ENCODE measurements at regions of chr2 and their contacts with region 1.

Region 1: DNA sequence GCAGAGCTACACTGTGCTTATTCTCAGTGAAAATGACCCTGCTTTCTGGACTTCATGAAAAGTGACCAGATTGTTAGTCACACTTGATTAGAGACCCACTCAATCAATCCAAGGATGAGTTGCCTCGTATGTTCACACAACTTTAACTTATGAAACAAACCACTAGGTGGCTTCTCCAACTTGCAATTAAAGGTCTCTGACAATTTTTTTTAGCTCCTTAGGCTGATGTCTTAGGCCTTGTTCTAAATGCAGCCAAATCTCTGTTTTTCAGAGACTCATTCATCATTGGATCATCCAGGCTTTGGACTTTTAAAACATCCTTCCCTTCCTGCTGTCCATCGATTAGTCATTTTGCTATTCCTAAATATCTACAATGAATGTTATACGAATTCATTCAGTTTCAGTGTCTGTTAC is 63.4 kb downstream of the MREG start:
- DNase-seq: peak; percentile 38
- ATAC-seq: no peak
- H3K4me3 ChIP-seq: no peak overlapping the region
- H3K4me3 Mint-ChIP-seq: no peak overlapping the region
- H3K27ac ChIP-seq: no peak overlapping the region
- H3K27ac Mint-ChIP-seq: no peak overlapping the region
- H3K4me1 ChIP-seq: no peaks in the 10 kb centered on the region
- H3K4me1 Mint-ChIP-seq: no peaks in the 10 kb centered on the region
- H3K27me3 ChIP-seq: no peaks in the 10 kb centered on the region
- H3K27me3 Mint-ChIP-seq: no peaks in the 10 kb centered on the region
- CTCF ChIP-seq: peak; percentile 57

Region 2: DNA sequence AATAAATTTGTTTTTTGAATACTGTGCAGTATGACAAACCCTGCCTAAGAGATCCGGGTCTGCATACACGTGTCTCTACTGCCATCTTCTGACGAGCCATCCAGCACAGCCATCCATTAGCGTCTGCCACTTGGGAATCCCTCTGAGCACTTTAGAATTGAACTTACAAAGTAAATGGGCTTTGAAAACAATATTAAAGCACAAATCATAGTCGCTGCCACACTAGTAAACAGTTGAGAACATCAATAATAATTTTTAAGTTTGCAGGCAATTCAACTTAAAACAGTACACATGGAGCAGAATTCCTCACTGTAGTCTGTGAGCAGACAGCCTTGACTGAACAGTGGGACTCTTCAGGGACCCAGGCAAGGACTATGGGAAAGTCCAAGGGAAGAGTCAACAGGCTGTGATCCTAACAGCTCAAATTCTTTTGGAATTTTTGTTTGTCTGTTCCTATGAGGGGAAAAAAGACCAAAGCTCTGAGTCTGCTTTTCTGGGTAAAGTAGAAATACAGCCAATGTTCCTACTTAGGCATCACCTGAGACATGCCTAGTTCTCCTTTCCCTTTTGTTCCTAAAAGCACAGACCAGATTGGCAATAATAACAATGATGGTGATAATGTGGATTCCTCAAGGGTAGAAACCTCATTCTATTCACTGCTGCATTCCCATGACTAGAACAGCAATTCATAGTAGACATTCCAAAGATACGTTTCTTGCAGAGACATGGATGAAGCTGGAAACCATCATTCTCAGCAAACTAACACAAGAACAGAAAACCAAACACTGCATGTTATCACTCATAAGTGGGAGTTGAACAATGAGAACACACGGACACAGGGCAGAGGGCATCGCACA is 29.5 kb before region 1 on chr2:
- CTCF ChIA-PET with region 1: no interaction called
- POLR2A ChIA-PET with region 1: no interaction called
- intact Hi-C with region 1: no loop called
- DNase-seq: peak; percentile 70
- ATAC-seq: peak; percentile 56
- H3K4me3 ChIP-seq: no peak overlapping the region
- H3K4me3 Mint-ChIP-seq: no peak overlapping the region
- H3K27ac ChIP-seq: no peak overlapping the region
- H3K27ac Mint-ChIP-seq: no peak overlapping the region
- H3K4me1 ChIP-seq: no peaks in the 10 kb centered on the region
- H3K4me1 Mint-ChIP-seq: no peaks in the 10 kb centered on the region
- H3K27me3 ChIP-seq: no peaks in the 10 kb centered on the region
- H3K27me3 Mint-ChIP-seq: peaks cover 23% of the 10 kb centered on the region
- CTCF ChIP-seq: peak; percentile 88

Region 3: GRCh38 chr2:216023055-216023648 is 73.2 kb after region 1 on chr2:
- CTCF ChIA-PET with region 1: interaction called, 53 read pairs
- POLR2A ChIA-PET with region 1: no interaction called
- intact Hi-C with region 1: loop called (anchors 1 kb)
- DNase-seq: peak; percentile 56
- ATAC-seq: peak; percentile 64
- H3K4me3 ChIP-seq: no peak overlapping the region
- H3K4me3 Mint-ChIP-seq: no peak overlapping the region
- H3K27ac ChIP-seq: no peak overlapping the region
- H3K27ac Mint-ChIP-seq: no peak overlapping the region
- H3K4me1 ChIP-seq: no peaks in the 10 kb centered on the region
- H3K4me1 Mint-ChIP-seq: no peaks in the 10 kb centered on the region
- H3K27me3 ChIP-seq: no peaks in the 10 kb centered on the region
- H3K27me3 Mint-ChIP-seq: no peaks in the 10 kb centered on the region
- CTCF ChIP-seq: peak; percentile 75

Measured in B cell (primary cell).